Sigmoid colon (tissue), 7 donors: ENCODE measurements at regions of chr19 and their contacts with region 1.

Region 1: DNA sequence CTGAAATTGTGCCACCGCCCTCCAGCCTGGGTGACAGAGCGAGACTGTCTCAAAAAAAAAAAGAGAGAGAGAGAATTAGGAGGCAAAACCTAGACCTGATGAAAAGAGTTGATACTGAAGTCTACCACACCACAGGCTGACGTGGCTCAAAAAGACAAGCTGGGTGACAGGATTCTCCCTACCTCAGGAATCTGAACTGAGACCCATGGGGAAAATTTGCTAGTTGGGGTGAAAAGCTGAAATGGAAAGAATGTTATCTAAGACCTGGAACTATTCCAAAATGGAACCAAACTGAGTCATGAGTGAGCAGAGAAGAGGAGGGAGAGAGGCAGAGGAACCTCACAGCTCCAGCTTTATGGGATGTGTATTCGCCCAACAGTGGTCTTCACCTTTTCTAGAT is 11.7 kb downstream of the SMG9 start:
- DNase-seq: no peak
- H3K4me3 ChIP-seq: no peak overlapping the region
- H3K27ac ChIP-seq: no peak overlapping the region
- H3K4me1 ChIP-seq: peaks cover 0 to 5% (median 0%) of the 10 kb centered on the region in 4 donors
- H3K27me3 ChIP-seq: no peaks in the 10 kb centered on the region
- CTCF ChIP-seq: no peak
- EP300 ChIP-seq: no peak
- POLR2A ChIP-seq: no peak

Region 2: GRCh38 chr19:43774103-43774939 is 31.3 kb after region 1 on chr19:
- intact Hi-C with region 1: loop called (anchors 1 kb)
- DNase-seq: no peak
- H3K4me3 ChIP-seq: peak overlapping the region in 3 of 4 donors; percentile 2 to 38 (median 35)
- H3K27ac ChIP-seq: peak overlapping the region in 2 of 4 donors; percentile 29 to 32
- H3K4me1 ChIP-seq: peaks cover 0 to 16% (median 13%) of the 10 kb centered on the region in 4 donors
- H3K27me3 ChIP-seq: peaks cover 6 to 38% (median 31%) of the 10 kb centered on the region in 3 donors
- CTCF ChIP-seq: peak in 3 of 4 experiments; percentile 35 to 62 (median 57)
- EP300 ChIP-seq: no peak
- POLR2A ChIP-seq: no peak

Region 3: DNA sequence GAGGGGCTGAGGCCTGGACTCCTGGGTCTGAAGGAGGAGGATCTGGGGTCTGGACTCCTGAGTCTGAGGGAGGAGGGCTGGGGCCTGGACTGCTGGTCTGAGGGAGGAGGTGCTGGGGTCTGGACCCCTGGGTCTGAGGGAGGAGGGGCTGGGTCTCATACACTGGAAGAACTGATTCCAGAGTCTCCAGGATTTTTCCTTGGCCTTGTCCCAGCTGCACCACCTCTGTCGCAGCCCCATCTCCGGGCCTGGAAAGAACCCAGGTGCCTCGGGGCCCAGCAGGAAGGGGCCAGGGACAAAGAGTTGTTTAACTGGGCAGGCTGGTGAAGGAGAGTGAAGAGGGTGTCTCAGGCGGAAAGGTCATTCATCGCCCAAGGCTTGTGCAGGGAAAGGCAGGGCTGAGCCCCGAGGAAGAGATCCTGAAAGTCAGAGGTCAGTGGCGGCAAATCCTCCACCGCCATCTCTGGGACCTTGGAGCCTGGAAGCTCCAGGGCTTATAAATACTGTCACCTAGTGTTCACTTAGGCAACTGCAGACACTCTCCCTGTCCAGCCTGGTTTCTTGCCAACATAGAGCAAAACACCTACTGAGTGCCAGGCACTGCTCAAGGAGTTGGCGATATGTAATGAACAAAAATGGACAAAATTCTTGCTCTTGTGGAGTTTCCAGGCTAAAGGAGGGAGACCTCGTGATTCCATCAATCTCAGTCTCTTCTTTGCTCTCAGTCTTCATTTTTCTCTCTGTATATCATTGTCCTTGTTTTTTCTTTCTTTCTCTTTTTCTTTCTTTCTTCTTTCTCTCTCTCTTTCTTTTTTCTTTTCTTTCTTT is 42.2 kb after region 1 on chr19:
- intact Hi-C with region 1: loop called (anchors 1 kb)
- DNase-seq: no peak
- H3K4me3 ChIP-seq: no peak overlapping the region
- H3K27ac ChIP-seq: peak overlapping the region in 2 of 4 donors; percentile 42
- H3K4me1 ChIP-seq: peaks cover 0 to 13% (median 8%) of the 10 kb centered on the region in 4 donors
- H3K27me3 ChIP-seq: peaks cover 2 to 33% (median 13%) of the 10 kb centered on the region in 3 donors
- CTCF ChIP-seq: peak; percentile 84 to 97 (median 94)
- EP300 ChIP-seq: no peak
- POLR2A ChIP-seq: no peak